IMR-90 (cell line): ENCODE measurements at regions of chr11 and their contacts with region 1.

Region 1: DNA sequence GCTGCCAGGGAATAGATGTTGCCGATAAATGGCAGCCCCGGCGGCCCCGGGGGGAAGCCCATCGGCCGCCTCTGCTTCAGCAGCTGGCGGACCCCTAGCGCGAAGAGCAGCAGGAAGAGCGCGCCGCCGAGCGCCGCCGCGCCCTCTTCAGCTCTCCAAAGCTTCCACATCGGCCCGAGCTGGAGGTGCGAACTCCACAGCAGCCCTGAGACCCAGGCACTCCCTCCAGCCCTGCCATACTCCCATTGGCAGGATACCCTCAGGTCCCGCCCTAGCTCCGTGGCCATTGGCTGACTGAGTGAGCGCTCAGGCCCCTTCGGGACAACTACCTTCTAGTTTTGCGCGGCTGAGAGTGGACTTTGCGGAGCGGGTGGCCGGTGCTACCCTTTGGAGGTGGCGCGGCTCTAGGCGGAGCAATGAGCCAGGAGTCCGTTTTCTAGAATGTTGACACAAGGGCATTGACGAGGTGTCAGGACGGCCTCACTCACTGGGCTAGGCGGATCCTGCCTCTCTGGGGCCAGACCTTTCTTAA is at the start of gene CYP2R1:
- DNase-seq: peak; percentile 95
- ATAC-seq: peak; percentile 98
- H3K4me3 ChIP-seq: peak within 1 kb of the TSS; percentile 77
- H3K27ac ChIP-seq: peak within 1 kb of the TSS; percentile 6
- H3K4me1 ChIP-seq: peaks cover 3% of the 10 kb centered on the region; the same call in 1 of the 2 replicates
- H3K27me3 ChIP-seq: no peaks in the 10 kb centered on the region; the same call in none of the 2 replicates
- CTCF ChIP-seq: no peak
- POLR2A ChIP-seq: no peak
- RAD21 ChIP-seq: no peak
- total RNA-seq, gene CYP2R1: 5.2 and 5.6 TPM in 2 replicates

Region 2: DNA sequence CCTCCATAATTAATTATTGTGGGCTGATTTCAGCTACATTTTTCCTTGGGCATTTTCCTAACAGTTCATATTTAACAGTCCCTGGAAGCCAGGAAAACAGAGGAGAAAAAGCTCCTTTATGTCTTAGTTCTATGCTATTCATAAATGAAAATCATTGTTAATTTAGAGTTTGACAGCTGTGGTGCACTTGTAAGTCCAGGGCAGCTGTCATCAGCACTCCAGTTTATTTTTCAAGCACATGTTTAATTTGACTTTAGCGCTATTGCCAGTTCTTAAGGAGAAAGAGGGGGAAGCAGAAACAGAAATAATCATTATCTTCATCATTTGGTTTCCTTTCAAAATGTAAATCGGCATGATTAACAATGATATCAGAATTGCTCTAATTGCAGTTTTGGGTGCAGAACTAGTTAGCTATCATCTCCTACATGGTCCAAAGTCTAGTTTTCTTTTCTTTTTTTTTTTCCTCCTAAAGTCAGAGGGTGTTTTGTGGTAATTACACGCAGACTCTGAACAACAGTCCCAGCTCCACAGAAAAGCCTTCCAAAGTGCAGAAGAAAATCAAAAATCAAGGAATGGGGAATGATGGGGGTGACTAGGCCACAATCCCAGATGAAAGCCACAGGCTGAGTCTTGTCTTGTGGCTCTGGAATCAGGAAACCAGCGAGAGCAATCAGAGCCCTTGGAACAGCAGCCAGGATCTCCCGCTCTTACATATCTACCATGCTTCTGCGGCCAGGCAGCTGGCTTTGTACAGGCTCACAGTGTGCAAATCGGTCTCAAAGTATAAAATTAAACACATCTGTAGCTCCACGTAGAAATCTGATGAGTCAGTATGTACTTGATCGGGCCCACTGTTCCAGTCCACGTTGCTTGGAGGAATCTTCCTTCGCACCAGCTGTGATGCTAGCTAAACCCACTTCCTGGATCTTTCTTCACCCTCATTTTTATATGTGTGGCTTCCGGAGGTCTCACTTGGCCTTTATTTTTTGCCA is 837.7 kb before region 1 on chr11:
- CTCF ChIA-PET with region 1: no interaction called
- POLR2A ChIA-PET with region 1: no interaction called
- dilution Hi-C with region 1: no loop called
- in situ Hi-C with region 1: no loop called
- intact Hi-C with region 1: no loop called
- DNase-seq: no peak
- ATAC-seq: no peak
- H3K4me3 ChIP-seq: no peak overlapping the region
- H3K27ac ChIP-seq: no peak overlapping the region
- H3K4me1 ChIP-seq: no peaks in the 10 kb centered on the region
- H3K27me3 ChIP-seq: peaks cover 5% of the 10 kb centered on the region; the same call in 1 of the 2 replicates
- CTCF ChIP-seq: no peak
- POLR2A ChIP-seq: no peak
- RAD21 ChIP-seq: no peak

Region 3: DNA sequence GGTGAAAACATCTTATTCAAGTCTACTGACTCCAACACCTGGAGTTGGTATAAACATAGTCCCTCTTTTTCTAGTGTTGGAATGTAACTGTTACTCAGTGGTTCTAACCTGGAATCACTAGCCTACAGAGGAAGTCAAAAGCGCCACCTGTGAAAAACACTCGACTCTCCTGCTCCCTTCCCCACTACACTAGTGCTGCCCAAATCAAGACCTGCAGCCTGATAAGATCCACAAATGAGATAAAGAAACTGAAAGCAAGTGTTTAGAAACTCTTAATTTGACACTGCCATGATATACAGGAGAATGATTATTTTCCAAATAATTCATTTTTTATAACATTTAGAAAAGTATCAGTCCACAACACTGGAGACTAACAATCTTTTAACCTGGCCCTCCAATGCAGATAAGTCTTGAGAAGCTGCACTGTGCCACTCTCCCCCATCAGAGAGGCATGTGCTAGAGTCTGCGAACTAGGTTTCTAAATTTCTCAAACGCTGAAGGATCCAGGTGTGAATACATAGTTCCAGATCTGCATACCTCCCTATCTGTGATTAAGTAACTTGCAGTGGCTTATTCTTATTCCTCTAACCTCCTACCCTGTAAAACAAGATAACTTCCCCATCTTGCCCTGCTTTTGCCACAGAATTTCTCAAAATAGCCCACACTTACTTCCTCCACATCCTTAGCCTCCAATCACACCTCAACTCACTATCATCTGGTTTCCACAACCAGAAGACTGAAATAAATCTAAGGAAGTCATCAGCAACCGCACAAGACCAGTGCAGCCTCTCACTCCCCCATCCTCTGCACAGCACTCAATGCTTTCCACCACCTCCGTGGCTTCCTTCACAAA is 621.2 kb before region 1 on chr11:
- CTCF ChIA-PET with region 1: no interaction called
- POLR2A ChIA-PET with region 1: no interaction called
- dilution Hi-C with region 1: no loop called
- in situ Hi-C with region 1: loop called (anchors 25 kb)
- intact Hi-C with region 1: no loop called
- DNase-seq: no peak
- ATAC-seq: no peak
- H3K4me3 ChIP-seq: no peak overlapping the region
- H3K27ac ChIP-seq: no peak overlapping the region
- H3K4me1 ChIP-seq: peaks cover 4% of the 10 kb centered on the region; the same call in 1 of the 2 replicates
- H3K27me3 ChIP-seq: no peaks in the 10 kb centered on the region
- CTCF ChIP-seq: no peak
- POLR2A ChIP-seq: no peak
- RAD21 ChIP-seq: no peak

Region 4: DNA sequence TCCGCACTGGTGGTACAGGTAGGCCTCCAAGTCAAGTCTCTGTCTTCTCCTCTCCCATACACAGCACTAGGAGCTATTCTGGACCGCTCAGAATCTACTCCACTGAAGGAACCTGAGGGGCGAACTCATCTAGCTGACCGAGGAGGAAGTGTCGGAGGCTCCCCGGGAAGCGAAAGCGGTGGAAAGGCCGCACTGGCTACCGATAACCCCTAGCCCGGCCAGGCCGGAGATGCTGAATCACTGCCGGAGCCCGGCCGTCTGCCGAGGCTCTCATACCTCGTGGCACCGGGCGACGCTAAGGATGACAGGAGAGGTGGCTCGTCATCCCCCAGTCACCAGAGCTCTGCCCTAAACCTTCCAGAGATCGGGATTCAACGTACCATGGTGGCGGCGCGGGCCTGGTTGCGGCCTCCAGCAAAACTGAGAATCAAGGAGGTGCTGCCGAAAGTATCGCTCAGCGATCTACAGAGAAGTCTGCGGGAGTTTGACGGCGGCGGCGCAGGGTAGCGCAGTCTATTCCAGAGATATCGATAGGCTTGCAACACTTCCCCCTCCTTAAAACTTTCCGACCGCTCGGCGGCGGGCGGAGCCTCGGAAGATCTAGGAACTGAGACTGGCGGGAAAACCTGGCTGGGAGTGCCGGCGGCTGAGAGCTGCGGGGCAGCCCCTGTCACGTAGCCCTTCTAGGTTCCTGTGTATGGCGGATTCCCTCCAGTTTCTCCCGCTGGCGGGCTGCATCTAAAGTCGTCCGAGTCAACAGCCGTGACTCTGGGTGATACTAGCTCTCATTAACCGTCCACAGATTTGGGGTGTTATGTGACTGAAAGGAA is 372.0 kb before region 1 on chr11 and contains the start of gene PSMA1:
- CTCF ChIA-PET with region 1: no interaction called
- POLR2A ChIA-PET with region 1: no interaction called
- dilution Hi-C with region 1: no loop called
- in situ Hi-C with region 1: loop called (anchors 5 kb)
- intact Hi-C with region 1: loop called (anchors 1 kb)
- DNase-seq: peak; percentile 94
- ATAC-seq: peak; percentile 98
- H3K4me3 ChIP-seq: peak within 1 kb of the TSS; percentile 81
- H3K27ac ChIP-seq: peak within 1 kb of the TSS; percentile 95
- H3K4me1 ChIP-seq: no peaks in the 10 kb centered on the region; the same call in 1 of the 2 replicates
- H3K27me3 ChIP-seq: no peaks in the 10 kb centered on the region
- CTCF ChIP-seq: no peak
- POLR2A ChIP-seq: peak; percentile 91
- RAD21 ChIP-seq: no peak
- total RNA-seq, gene PSMA1: 194 and 219 TPM in 2 replicates